ENCODE measurements at regions of chr19 and their contacts with region 1.

Region 1: GRCh38 chr19:14674764-14675163 is at the start of gene ADGRE3:
- DNase-seq: no peak
- H3K4me3 Mint-ChIP-seq: no peak within 1 kb of the TSS
- H3K27ac Mint-ChIP-seq: no peak within 1 kb of the TSS
- H3K4me1 Mint-ChIP-seq: peaks cover 2% of the 10 kb centered on the region
- H3K27me3 Mint-ChIP-seq: peaks cover 7% of the 10 kb centered on the region
- total RNA-seq, gene ADGRE3: not detected

Region 2: GRCh38 chr19:14595516-14595915 is 79.2 kb before region 1 on chr19:
- CTCF ChIA-PET with region 1: no interaction called
- POLR2A ChIA-PET with region 1: no interaction called
- DNase-seq: no peak
- H3K4me3 Mint-ChIP-seq: no peak overlapping the region
- H3K27ac Mint-ChIP-seq: no peak overlapping the region
- H3K4me1 Mint-ChIP-seq: no peaks in the 10 kb centered on the region
- H3K27me3 Mint-ChIP-seq: no peaks in the 10 kb centered on the region

Region 3: DNA sequence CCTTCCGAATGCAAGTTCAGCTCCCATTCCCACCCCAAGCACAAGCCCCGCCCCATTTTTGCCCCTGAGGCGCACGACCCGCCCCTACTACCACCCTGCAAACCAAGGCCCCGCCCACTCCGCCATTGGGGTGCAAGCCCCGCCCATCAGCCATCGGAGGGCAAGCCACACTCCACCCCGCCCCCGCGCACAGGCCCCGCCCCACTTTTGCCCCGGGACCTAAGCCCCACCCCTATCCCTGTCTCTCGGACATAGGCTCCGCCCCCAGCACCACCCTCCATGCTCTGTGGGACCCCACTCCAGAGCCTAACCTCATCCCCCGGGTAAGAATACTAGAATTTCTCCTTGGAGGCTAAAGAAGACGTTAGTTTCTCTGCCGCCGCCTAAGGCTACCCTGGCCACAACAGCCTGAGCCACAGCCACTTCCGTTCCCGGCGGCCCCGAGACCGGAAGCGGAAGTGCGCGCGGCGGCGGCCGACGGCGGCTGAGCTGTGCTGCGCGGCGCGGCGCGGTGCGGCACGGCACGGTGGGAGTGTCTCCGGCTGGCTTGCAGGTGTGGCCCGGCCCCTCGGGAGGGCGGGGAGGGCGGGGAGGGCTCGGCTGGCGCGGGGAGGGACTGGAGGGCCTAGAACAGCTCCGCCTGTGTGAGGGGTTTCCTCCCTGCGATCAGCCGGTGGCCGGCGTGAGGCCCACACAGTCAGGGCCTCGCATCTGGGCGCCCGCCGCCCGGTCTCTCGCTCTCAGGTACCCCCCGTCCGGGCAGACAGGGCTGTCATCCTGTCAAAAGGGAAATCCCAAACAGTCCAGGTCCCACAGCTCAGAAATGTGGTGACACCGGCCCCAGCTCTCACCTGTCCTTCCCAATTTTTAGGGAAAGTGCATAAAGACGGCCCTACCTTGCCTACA is 15.1 kb after region 1 on chr19 and contains the start of gene ZNF333:
- CTCF ChIA-PET with region 1: interaction called, 15 read pairs
- POLR2A ChIA-PET with region 1: interaction called, 3 read pairs
- DNase-seq: peak; percentile 99
- H3K4me3 Mint-ChIP-seq: peak within 1 kb of the TSS; percentile 92
- H3K27ac Mint-ChIP-seq: peak within 1 kb of the TSS; percentile 98
- H3K4me1 Mint-ChIP-seq: peaks cover 22% of the 10 kb centered on the region
- H3K27me3 Mint-ChIP-seq: no peaks in the 10 kb centered on the region
- total RNA-seq, gene ZNF333: 11.7 to 12.1 TPM